Left lung (tissue), 14 donors: ENCODE measurements at regions of chr3 and their contacts with region 1.

Region 1: GRCh38 chr3:173568623-173569022 is 171.1 kb downstream of the NLGN1 start:
- DNase-seq: peak in 1 of 4 donors; percentile 38
- ATAC-seq: no peak
- H3K4me3 ChIP-seq: no peak overlapping the region
- H3K27ac ChIP-seq: no peak overlapping the region
- H3K4me1 ChIP-seq: no peaks in the 10 kb centered on the region
- H3K27me3 ChIP-seq: no peaks in the 10 kb centered on the region
- CTCF ChIP-seq: no peak

Region 2: DNA sequence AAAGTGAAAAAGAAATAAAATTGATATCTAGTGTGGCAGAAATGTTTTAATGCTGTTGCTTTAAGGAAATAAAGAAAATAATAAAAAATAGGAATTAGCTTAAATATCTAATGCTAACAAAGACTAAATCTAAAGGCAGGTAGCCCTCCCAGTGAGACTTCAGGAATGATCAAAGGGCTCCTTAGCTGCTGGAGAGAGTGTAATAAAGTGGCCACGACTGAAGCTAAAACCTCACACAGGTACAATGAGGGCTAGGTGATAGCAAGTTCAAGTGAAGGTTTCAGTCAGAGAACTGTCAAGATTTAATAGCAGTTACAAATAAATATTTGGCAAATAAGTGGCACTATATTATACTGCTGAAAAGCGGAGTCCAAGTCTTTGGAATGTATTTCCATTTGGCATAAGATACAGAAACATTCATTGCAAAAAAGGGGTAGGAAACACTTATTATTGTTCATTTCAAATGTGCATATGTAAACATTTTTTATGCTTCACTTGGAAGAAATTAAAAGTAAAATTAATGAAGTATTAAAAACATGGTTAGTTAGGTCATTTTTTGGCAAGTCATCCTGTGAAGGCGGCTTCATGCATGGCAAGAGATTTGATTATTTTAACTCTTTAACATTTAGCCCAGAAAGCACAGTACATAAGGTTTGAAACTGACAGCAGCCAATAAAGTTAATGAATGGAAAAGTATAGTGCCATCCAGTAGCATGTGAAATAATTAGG is 649.9 kb before region 1 on chr3:
- intact Hi-C with region 1: no loop called
- DNase-seq: peak in 1 of 4 donors; percentile 26
- ATAC-seq: no peak
- H3K4me3 ChIP-seq: no peak overlapping the region
- H3K27ac ChIP-seq: no peak overlapping the region
- H3K4me1 ChIP-seq: peaks cover 0 to 7% of the 10 kb centered on the region in 2 donors
- H3K27me3 ChIP-seq: no peaks in the 10 kb centered on the region
- CTCF ChIP-seq: no peak

Region 3: GRCh38 chr3:173199568-173199967 is 369.1 kb before region 1 on chr3:
- intact Hi-C with region 1: no loop called
- DNase-seq: no peak
- ATAC-seq: no peak
- H3K4me3 ChIP-seq: no peak overlapping the region
- H3K27ac ChIP-seq: no peak overlapping the region
- H3K4me1 ChIP-seq: no peaks in the 10 kb centered on the region
- H3K27me3 ChIP-seq: no peaks in the 10 kb centered on the region
- CTCF ChIP-seq: no peak

Region 4: GRCh38 chr3:173529067-173529711 is 39.4 kb before region 1 on chr3:
- intact Hi-C with region 1: loop called in 1 of 2 experiments (anchors 5 kb)
- DNase-seq: no peak
- ATAC-seq: peak; percentile 81
- H3K4me3 ChIP-seq: no peak overlapping the region
- H3K27ac ChIP-seq: no peak overlapping the region
- H3K4me1 ChIP-seq: no peaks in the 10 kb centered on the region
- H3K27me3 ChIP-seq: no peaks in the 10 kb centered on the region
- CTCF ChIP-seq: peak; percentile 17 to 21